PC-9 (cell line): ENCODE measurements at regions of chr9 and their contacts with region 1.

Region 1: DNA sequence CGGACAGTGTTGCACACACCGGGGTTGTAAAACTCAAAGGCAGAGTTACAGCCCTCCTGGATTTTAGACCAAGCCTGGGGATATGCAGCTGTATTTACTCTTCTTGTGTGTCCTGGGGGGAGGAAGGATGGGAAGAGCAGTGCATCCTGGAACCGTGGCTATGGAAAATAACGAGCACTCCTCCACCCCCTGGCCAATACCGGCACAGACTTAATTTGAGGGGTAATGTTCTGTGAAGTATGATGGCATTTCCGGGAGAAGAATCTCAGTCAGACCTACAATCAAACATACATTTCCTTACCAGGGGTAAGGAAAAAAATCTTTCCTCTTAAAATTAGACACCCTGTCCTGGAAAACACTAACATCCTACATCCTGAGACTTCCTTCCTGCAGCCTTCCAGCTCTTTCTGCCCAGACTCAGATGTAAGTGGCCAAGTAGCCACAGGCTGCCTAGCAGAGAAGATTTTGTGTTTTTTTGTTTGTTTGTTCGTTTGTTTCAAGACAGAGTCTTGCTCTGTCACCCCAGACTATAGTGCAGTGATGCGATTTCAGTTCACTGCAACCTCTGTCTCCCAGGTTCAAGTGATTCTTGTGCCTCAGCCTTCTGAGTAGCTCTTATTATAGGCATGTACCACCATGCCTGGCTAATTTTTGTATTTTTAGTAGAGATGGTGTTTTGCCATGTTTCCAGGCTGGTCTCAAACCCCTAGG is 11.0 kb upstream of the ERMP1 start:
- DNase-seq: peak in 1 of 2 experiments; percentile 86
- H3K4me3 ChIP-seq: peak overlapping the region; percentile 25; the same call in 1 of the 2 replicates
- H3K27ac ChIP-seq: peak overlapping the region; percentile 99
- H3K4me1 ChIP-seq: peaks cover 83% of the 10 kb centered on the region
- H3K27me3 ChIP-seq: no peaks in the 10 kb centered on the region
- CTCF ChIP-seq: no peak

Region 2: DNA sequence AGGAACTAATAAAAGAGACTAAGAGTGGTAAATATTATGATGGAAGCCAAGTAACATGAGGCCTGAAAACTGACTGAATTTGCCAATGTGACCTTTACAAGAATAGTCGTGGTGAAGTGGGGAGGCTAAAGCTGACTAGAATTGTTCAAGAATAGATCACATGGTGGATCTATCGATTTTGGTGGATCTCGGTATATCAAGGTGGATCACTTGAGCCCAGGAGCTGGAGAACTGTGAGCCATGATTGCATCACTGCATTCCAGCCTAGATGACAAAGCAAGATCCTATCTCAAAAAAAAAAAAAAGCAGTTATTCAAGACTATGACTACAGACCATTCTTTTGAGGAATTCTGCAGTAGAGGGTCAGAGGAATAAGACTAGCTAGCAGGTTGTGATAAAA is 26.1 kb before region 1 on chr9:
- CTCF ChIA-PET with region 1: interaction called, 3 read pairs
- POLR2A ChIA-PET with region 1: no interaction called
- intact Hi-C with region 1: loop called (anchors 1 kb)
- DNase-seq: peak; percentile 41 to 81
- H3K4me3 ChIP-seq: no peak overlapping the region
- H3K27ac ChIP-seq: peak overlapping the region; percentile 88
- H3K4me1 ChIP-seq: peaks cover 40% of the 10 kb centered on the region
- H3K27me3 ChIP-seq: no peaks in the 10 kb centered on the region
- CTCF ChIP-seq: no peak

Region 3: DNA sequence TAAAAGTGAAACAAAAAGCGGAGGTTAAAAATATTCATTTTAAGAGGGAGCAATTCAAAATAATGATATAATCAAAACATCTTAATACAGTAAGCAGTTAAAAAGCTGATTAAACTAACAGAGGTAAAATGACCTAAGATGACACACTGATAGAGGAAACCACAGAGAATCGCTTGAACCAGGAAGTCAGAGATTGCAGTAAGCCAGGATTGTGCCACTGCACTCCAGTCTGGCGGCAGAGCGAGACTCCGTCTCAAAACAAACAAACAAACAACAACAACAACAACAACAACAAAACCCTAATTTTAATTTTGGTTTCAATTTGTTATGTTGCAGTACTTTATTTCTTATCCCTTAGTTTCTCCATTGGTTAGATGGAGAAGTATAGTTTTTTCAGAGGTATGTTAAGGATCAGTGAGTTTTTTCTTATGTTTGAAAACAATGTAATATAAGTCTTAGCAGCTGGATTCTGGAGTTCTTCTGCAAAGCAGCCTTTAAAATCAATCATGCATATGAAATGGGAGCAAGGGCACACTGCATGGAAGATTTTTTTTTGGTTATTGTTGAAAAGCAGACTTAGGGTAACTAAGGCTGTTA is 105.3 kb after region 1 on chr9:
- CTCF ChIA-PET with region 1: no interaction called
- POLR2A ChIA-PET with region 1: no interaction called
- intact Hi-C with region 1: loop called (anchors 5 kb)
- DNase-seq: peak; percentile 11 to 44
- H3K4me3 ChIP-seq: peak overlapping the region; percentile 35; the same call in 1 of the 2 replicates
- H3K27ac ChIP-seq: peak overlapping the region; percentile 27; the same call in 1 of the 2 replicates
- H3K4me1 ChIP-seq: peaks cover 24% of the 10 kb centered on the region
- H3K27me3 ChIP-seq: no peaks in the 10 kb centered on the region
- CTCF ChIP-seq: no peak